Activated T-helper 1 cell treated with anti-CD3 and anti-CD28 coated beads, Interleukin-12 subunit alpha, Interleukin-12 subunit beta, Interleukin-2, Interleukin-4 antibody, amounts not matched to agents 30 ng/mL and 10 ng/mL and 1 ng/mL, durations not matched to agents 14 hours and 24 hours and 36 hours (primary cell): ENCODE measurements at regions of chr12 and their contacts with region 1.

Region 1: GRCh38 chr12:51424662-51425438 is at the start of gene SLC4A8:
- DNase-seq: peak; percentile 75
- H3K4me3 Mint-ChIP-seq: peak within 1 kb of the TSS; percentile 82
- H3K27ac Mint-ChIP-seq: peak within 1 kb of the TSS; percentile 27
- H3K4me1 Mint-ChIP-seq: peaks cover 16% of the 10 kb centered on the region
- H3K27me3 Mint-ChIP-seq: peaks cover 18% of the 10 kb centered on the region
- total RNA-seq, gene SLC4A8: 2.4 and 2.6 TPM in 2 replicates

Region 2: DNA sequence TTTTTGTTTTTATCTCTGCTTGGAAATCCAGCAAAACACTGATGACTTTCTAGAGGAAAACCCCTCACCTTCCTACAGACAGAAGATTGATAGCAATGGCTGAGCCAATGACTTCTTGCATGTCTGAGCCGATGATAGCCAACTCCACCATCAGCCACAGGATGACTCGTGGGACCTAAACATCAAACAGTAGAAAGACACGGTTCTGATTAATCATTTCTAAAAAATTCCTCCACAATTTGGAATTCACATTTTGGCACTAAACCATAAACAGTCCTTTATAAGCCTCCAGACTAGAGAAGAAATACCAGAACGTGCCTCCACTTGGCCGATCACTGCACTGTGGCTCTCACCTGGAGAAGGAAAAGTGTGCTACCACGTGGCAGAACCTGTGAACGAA is 424.6 kb before region 1 on chr12:
- intact Hi-C with region 1: no loop called
- DNase-seq: no peak
- H3K4me3 Mint-ChIP-seq: no peak overlapping the region
- H3K27ac Mint-ChIP-seq: no peak overlapping the region
- H3K4me1 Mint-ChIP-seq: peaks cover 20% of the 10 kb centered on the region
- H3K27me3 Mint-ChIP-seq: no peaks in the 10 kb centered on the region

Region 3: DNA sequence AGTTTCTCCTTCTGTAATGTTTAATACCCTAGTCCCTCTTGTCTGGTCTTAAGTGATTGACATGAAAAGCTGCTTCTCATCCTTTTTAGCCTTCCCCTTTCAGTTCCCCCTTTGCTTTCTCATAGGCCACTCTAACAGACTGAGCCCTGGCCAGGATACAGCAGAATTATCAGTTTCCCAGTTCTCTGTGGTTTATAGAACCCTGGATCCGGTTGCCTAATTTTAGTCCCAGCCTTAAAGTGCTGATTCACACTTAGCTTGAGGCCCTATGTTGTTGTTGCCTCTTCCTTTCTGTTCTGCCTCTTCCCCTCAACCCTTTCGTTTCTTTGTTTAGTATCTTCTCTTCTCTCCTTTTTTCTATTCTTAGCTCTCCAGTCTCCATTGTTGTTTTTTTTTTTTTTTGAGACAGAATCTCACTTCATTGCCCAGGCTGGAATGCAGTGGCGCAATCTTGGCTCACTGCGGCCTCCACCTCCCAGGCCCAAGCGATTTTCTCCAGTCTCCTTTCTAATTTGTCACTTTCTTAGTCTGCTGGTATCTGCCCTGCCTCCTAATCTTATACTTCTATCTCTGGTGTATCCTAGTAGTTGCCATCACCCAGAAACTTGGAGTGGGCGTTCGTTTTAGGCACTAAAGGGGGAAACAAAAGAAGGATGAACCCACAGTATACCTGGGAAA is 97.9 kb before region 1 on chr12:
- intact Hi-C with region 1: no loop called
- DNase-seq: peak; percentile 6
- H3K4me3 Mint-ChIP-seq: peak overlapping the region; percentile 55
- H3K27ac Mint-ChIP-seq: peak overlapping the region; percentile 89
- H3K4me1 Mint-ChIP-seq: peaks cover 75% of the 10 kb centered on the region
- H3K27me3 Mint-ChIP-seq: no peaks in the 10 kb centered on the region

Region 4: GRCh38 chr12:51368640-51369517 is 56.0 kb before region 1 on chr12:
- intact Hi-C with region 1: loop called (anchors 2 kb)
- DNase-seq: peak; percentile 89
- H3K4me3 Mint-ChIP-seq: peak overlapping the region; percentile 56
- H3K27ac Mint-ChIP-seq: peak overlapping the region; percentile 70
- H3K4me1 Mint-ChIP-seq: peaks cover 67% of the 10 kb centered on the region
- H3K27me3 Mint-ChIP-seq: peaks cover 7% of the 10 kb centered on the region

Region 5: DNA sequence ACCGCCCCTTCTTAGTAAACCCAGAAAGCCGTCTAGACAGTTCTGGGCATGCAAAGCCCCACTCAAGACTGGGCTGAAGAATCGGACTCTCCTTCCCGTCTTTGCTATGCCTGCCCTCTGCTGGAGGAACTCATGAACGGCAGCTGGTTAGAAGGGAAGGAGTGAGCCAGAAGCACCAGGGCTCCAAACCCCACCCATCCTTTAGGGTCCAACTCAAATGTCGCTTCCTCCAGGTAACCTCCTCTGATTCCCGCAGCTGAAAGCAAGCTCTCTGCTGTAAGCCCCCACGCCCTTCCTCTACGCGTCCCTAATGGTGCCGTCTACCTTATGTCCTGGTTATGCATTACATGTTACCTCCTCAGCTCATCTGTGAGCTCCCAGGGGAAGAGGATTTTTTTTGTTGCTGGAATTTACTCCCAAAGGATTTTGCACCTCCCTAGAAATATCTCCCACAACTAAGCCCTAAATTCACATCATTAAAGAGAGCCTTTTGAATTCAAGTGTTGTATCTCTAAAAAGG is 107.2 kb after region 1 on chr12:
- intact Hi-C with region 1: loop called (anchors 1 kb)
- DNase-seq: peak; percentile 68
- H3K4me3 Mint-ChIP-seq: no peak overlapping the region
- H3K27ac Mint-ChIP-seq: no peak overlapping the region
- H3K4me1 Mint-ChIP-seq: peaks cover 8% of the 10 kb centered on the region
- H3K27me3 Mint-ChIP-seq: peaks cover 11% of the 10 kb centered on the region

Region 6: GRCh38 chr12:51678086-51678724 is 253.4 kb after region 1 on chr12:
- intact Hi-C with region 1: loop called (anchors 1 kb)
- DNase-seq: no peak
- H3K4me3 Mint-ChIP-seq: no peak overlapping the region
- H3K27ac Mint-ChIP-seq: no peak overlapping the region
- H3K4me1 Mint-ChIP-seq: no peaks in the 10 kb centered on the region
- H3K27me3 Mint-ChIP-seq: peaks cover 10% of the 10 kb centered on the region

Region 7: GRCh38 chr12:51871126-51871525 is 446.3 kb after region 1 on chr12:
- intact Hi-C with region 1: loop called (anchors 1 kb)
- DNase-seq: no peak
- H3K4me3 Mint-ChIP-seq: no peak overlapping the region
- H3K27ac Mint-ChIP-seq: no peak overlapping the region
- H3K4me1 Mint-ChIP-seq: peaks cover 12% of the 10 kb centered on the region
- H3K27me3 Mint-ChIP-seq: peaks cover 55% of the 10 kb centered on the region

Region 8: GRCh38 chr12:53267999-53268647 is 1843.3 kb after region 1 on chr12 and contains the start of gene ESPL1:
- intact Hi-C with region 1: no loop called
- DNase-seq: peak; percentile 81
- H3K4me3 Mint-ChIP-seq: peak within 1 kb of the TSS; percentile 90
- H3K27ac Mint-ChIP-seq: peak within 1 kb of the TSS; percentile 88
- H3K4me1 Mint-ChIP-seq: peaks cover 43% of the 10 kb centered on the region
- H3K27me3 Mint-ChIP-seq: no peaks in the 10 kb centered on the region
- total RNA-seq, gene ESPL1: 61.2 and 68.4 TPM in 2 replicates